Endothelial cell of umbilical vein (primary cell): ENCODE measurements at regions of chr7 and their contacts with region 1.

Region 1: GRCh38 chr7:16431646-16432424 is 10.5 kb upstream of the CRPPA start:
- DNase-seq: peak; percentile 18
- H3K4me3 ChIP-seq: no peak overlapping the region
- H3K27ac ChIP-seq: no peak overlapping the region
- H3K4me1 ChIP-seq: no peaks in the 10 kb centered on the region
- H3K27me3 ChIP-seq: no peaks in the 10 kb centered on the region
- CTCF ChIP-seq: peak in 1 of 2 donors; percentile 17
- POLR2A ChIP-seq: no peak

Region 2: GRCh38 chr7:16450366-16450765 is 18.5 kb after region 1 on chr7:
- CTCF ChIA-PET with region 1: interaction called, 10 read pairs
- POLR2A ChIA-PET with region 1: no interaction called
- dilution Hi-C with region 1: no loop called
- intact Hi-C with region 1: no loop called
- DNase-seq: no peak
- H3K4me3 ChIP-seq: no peak overlapping the region
- H3K27ac ChIP-seq: no peak overlapping the region
- H3K4me1 ChIP-seq: no peaks in the 10 kb centered on the region
- H3K27me3 ChIP-seq: no peaks in the 10 kb centered on the region
- CTCF ChIP-seq: no peak
- POLR2A ChIP-seq: no peak